ENCODE measurements at regions of chr18 and their contacts with region 1.

Region 1: DNA sequence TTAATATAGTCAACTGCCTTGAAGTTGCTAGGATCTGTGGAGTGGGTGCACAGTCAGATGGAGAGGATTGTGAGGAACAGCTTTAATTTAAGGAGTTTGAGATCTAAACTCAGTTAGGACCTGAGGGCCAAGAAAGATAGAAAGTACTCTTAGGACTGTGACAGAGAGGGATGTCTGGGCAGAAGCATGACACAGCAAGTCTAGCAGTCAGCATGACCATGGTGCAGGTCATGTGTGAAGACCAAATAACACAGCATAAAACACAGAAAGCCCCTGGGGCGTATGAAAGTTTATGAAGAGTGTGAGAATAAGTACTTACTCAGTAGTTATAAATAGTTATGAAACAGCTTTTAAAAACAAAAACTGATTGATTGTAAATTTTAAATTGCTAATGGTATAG is 107.2 kb downstream of the GALNT1 start:
- DNase-seq: no peak
- H3K4me3 ChIP-seq: no peak overlapping the region
- H3K27ac ChIP-seq: no peak overlapping the region
- H3K4me1 ChIP-seq: peaks cover 3% of the 10 kb centered on the region
- H3K27me3 ChIP-seq: no peaks in the 10 kb centered on the region
- CTCF ChIP-seq: no peak
- POLR2A ChIP-seq: no peak

Region 2: DNA sequence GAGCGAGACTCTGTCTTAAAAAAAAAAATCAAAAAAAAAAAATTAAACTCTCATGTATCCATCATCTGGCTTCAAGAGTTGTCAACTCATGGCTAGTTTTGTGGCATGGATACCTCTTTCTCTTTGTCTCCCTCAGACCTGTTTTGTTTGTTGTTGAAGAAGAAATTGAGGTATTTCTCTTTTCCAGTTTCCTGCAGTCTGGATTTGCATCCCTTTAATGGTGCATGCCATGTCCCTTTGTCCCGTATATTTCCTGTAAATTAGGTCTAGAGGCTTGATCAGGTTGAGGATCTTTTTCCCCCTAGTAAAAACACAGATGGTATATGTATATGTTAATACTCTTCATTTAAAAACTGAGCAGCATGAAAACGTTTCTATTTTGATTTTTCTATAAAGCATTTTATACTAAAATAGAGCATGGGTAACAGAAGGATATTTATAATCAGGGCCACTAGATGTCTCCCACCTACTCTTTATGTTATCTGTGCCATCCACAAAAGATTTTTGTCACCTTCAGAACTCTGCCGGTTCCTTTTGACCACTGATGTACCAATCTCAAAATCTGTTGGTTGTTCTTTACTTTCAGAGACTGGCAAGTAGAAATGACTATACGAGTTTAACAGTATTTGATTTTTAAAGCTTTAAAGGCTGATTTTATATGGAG is 27.1 kb before region 1 on chr18:
- CTCF ChIA-PET with region 1: no interaction called
- POLR2A ChIA-PET with region 1: no interaction called
- dilution Hi-C with region 1: no loop called
- intact Hi-C with region 1: loop called (anchors 2 kb)
- DNase-seq: peak; percentile 47
- H3K4me3 ChIP-seq: no peak overlapping the region
- H3K27ac ChIP-seq: no peak overlapping the region
- H3K4me1 ChIP-seq: peaks cover 15% of the 10 kb centered on the region
- H3K27me3 ChIP-seq: no peaks in the 10 kb centered on the region
- CTCF ChIP-seq: no peak
- POLR2A ChIP-seq: no peak